Endothelial cell of umbilical vein (primary cell): ENCODE measurements at regions of chr5 and their contacts with region 1.

Region 1: GRCh38 chr5:43602461-43603343 is at the start of gene NNT:
- DNase-seq: peak; percentile 70
- H3K4me3 ChIP-seq: peak within 1 kb of the TSS; percentile 53 to 86 (median 80)
- H3K27ac ChIP-seq: peak within 1 kb of the TSS; percentile 88
- H3K4me1 ChIP-seq: peaks cover 19% of the 10 kb centered on the region
- H3K27me3 ChIP-seq: no peaks in the 10 kb centered on the region
- CTCF ChIP-seq: no peak
- POLR2A ChIP-seq: no peak
- total RNA-seq, gene NNT: 75.6 and 82.5 TPM in 2 replicates

Region 2: DNA sequence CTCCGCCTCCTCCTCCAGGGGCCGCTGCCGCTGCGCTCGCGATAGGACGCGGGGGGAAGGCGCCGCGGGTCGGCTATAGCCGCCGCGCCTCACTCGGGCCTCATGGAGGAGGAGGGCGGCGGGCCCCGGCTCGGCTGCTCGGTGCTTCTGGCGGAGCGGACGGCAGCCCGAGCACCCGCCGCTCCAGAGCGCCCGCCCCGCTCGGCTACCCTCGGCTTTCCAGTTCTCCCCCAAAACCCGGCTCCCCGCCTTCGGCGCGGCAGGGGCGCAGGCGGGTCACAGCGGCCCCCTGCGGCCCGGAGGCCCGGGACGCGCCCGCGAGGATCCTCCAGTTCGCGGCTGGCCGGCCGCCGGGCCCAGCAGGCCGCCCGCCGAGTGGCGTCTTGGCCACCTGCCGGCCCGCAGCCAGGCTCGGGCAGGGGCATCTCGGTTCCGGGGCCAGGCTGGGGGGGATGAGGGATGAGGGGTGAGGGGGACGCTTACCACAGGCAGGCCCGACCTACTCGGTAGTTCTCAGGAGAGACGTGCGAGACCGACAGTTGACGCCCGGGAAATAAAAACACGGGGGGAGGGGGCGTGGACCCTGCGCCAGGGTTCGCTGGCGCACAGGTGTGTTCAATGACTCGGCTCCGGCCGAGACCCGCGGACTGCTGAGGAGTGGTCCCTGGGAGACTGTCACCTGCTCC is 45.7 kb before region 1 on chr5 and contains the start of gene PAIP1:
- CTCF ChIA-PET with region 1: interaction called, 11 read pairs
- POLR2A ChIA-PET with region 1: interaction called, 4 read pairs
- dilution Hi-C with region 1: no loop called
- intact Hi-C with region 1: loop called (anchors 1 kb)
- DNase-seq: peak; percentile 86
- H3K4me3 ChIP-seq: peak within 1 kb of the TSS; percentile 91 to 98 (median 96)
- H3K27ac ChIP-seq: peak within 1 kb of the TSS; percentile 73
- H3K4me1 ChIP-seq: peaks cover 25% of the 10 kb centered on the region
- H3K27me3 ChIP-seq: peaks cover 1 to 3% of the 10 kb centered on the region in 2 experiments
- CTCF ChIP-seq: peak; percentile 44 to 71
- POLR2A ChIP-seq: no peak
- total RNA-seq, gene PAIP1: 81.6 and 90.1 TPM in 2 replicates

Region 3: DNA sequence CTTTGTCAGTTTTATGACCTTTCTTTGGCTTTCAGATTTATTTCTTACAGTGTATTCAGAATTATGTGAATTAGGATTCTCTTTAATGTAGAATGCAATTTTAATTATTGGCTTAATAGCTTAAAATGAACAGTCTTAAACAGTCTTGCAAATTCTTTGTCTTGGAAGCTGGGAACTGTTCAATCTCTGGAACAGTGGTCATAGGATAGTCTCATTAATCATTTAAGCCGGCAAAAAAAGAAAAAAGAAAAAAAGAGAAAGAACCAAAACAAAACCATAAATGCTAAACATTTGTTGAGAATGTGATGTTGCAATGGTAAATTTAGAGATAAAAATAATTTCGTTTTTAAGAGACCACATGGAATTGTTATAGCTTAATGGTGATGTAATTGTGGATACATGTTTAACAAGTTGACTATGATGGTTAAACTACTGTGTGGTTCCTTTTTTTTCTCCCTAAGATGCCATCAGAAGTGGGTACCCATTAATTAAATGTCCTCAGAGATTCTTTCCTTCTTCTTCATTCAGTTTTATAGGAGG is 61.9 kb after region 1 on chr5:
- CTCF ChIA-PET with region 1: no interaction called
- POLR2A ChIA-PET with region 1: no interaction called
- dilution Hi-C with region 1: no loop called
- intact Hi-C with region 1: no loop called
- DNase-seq: no peak
- H3K4me3 ChIP-seq: no peak overlapping the region
- H3K27ac ChIP-seq: no peak overlapping the region
- H3K4me1 ChIP-seq: no peaks in the 10 kb centered on the region
- H3K27me3 ChIP-seq: no peaks in the 10 kb centered on the region
- CTCF ChIP-seq: no peak
- POLR2A ChIP-seq: no peak

Region 4: GRCh38 chr5:43917925-43918324 is 315.2 kb after region 1 on chr5:
- CTCF ChIA-PET with region 1: no interaction called
- POLR2A ChIA-PET with region 1: no interaction called
- dilution Hi-C with region 1: no loop called
- intact Hi-C with region 1: no loop called
- DNase-seq: no peak
- H3K4me3 ChIP-seq: no peak overlapping the region
- H3K27ac ChIP-seq: no peak overlapping the region
- H3K4me1 ChIP-seq: no peaks in the 10 kb centered on the region
- H3K27me3 ChIP-seq: no peaks in the 10 kb centered on the region
- CTCF ChIP-seq: no peak
- POLR2A ChIP-seq: no peak